ENCODE measurements at regions of chr15 and their contacts with region 1.

Region 1: DNA sequence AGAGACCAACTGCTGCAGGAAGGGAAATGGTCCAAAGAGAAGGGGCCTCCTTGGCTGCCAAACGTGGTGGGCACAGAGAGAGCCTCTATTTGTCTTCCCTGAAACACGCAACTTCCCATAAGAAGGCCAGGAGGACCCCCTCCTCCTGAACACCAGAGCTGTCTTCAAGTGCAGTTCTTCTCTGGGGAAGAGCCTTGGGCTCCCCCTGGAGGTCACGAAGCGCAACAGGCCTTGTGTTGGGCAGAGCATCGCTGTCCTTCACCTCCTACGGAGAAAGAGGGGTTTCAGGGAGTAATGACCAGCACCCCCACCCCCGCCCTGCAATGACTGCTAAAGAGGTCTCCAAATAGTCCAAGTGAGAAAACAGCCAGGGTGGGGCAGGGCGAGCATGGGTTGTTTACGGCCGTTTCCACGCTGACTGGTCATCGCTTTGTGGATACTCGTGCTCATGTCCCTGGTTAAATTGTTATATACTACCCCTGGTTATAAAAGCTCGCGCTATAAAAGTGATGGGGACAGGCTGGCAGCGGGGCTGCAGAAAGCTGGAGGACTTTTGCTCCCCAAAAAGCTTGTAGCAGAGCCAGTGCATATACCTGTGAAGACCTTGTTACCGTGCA is 397.5 kb upstream of the ATP10A start:
- DNase-seq: no peak

Region 2: GRCh38 chr15:24734391-24734790 is 1526.2 kb before region 1 on chr15:
- intact Hi-C with region 1: loop called in 1 of 2 experiments (anchors 10 kb)
- DNase-seq: no peak

Region 3: GRCh38 chr15:25674913-25675312 is 585.7 kb before region 1 on chr15:
- intact Hi-C with region 1: loop called in 1 of 2 experiments (anchors 5 kb)
- DNase-seq: peak; percentile 91

Region 4: DNA sequence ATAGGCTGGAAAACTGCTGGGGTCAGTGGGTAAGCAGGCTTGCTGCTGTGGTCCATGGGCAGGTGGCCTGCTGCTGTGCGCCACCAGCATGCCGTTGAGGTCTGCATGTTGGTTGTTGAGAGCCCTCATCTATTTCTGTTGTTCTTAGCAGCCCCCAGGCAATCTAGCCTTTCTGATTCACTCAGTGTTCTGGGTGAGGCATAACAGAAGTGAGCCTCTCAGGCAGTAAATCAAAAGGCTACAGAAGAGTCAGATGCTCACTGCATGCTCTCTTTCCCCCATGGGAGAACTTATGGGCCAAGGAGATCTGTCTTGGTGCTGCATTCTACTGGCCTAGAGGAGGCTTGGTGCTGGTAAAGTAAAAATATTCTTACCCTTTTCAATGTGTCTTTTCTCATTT is 329.7 kb before region 1 on chr15:
- intact Hi-C with region 1: no loop called
- DNase-seq: no peak

Region 5: DNA sequence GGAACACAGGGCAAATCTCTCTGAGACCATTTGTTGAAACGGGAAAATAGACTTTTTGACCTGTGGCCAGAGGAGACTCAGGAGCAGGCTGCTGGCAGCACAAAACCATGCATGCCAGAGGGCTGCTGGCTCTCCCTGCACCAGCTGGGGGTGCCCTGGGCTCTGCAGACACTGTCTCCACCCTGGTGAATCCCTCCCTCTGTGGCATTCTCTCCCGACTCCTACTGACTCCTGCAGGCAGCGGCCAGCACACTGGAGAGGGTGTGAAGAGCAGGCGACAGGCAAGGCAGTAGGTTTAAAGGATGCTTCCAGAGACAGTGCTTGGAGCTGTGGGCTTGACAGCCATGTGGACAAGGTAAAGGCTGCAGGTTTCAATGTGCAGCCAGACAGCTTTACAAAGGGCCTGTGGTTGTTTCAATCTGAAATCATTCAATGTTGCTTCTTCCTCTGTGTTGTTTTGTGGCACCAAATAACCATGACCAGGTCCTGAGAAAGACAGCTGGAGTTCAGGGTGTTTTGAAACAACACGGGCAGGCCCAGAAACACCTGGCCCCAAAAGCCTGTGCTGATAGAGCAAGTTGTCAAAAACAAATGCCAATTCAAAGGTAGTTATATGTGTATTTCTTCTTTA is 33.5 kb after region 1 on chr15:
- intact Hi-C with region 1: no loop called
- DNase-seq: no peak

Measured in posterior vena cava (tissue), 2 donors.